ENCODE measurements at regions of chr5 and their contacts with region 1.

Region 1: DNA sequence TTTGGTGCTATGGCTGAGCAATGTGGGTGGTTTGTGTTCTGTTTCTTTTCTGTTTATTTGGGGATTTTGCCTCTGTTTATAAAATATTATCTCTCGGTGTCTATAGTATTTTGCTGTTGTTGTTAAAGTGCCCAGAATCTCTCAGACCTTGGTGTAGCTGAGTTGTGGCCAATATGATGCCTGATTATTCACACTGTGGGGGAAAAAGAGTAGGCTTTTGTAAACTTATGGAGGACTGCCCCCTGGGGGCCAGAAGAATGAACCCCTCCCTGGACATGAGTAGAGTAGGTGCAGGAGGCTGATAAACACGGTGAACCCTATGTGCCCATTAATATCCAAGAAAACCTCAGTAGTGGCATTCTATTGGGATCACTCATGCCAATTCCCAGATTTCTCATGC is 49.0 kb upstream of the DPYSL3 start:
- DNase-seq: peak; percentile 22 to 31
- H3K4me3 ChIP-seq: no peak overlapping the region
- H3K27ac ChIP-seq: no peak overlapping the region
- H3K4me1 ChIP-seq: peaks cover 8 to 10% of the 10 kb centered on the region in 2 donors
- H3K27me3 ChIP-seq: no peaks in the 10 kb centered on the region
- CTCF ChIP-seq: peak in 4 of 6 experiments; percentile 32 to 43 (median 38)
- POLR2A ChIP-seq: no peak

Region 2: DNA sequence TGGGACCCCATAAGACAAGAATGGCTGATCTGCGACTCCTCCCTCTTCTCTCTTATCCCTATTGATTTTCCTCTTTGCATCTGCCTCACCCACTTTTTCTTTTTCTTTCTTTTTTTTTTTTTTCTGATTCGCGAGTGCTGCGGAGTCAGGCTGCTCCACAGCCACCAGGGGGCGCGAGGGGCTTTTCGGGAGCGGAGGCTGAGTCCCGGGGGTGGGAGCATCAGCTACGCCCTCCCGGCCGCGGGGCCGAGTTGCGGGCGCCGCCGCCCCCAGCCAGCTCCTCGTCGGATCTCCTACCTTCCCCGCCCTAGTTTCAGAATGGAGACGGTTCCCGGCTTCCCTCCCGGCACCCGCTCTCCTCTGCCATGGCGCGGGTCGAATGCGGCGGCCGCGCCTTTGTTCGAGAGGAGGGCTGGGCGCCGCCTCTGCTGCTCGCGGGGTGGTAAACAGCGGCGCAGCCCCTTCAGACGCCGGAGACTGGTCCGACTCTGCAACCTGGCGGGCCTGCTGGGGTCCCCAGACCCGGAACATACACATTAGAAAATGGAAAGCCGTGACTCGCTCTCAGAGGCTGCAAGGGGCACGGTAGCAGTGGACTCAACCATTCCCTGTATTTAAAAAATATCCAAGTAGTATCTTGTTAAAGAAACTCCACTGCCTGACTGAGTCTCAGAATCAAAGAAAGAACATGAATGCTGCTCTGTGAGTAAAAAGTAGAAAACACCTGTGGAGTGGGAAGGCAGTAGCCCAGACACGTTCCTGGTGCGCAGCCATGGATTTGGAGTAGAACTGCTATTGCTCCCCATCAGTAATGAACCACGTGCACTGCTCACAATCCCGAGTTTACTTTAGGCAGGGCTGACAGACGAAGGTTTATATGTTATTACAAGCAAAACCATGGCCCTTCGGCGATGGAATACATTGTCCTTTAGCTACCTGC is 104.7 kb before region 1 on chr5:
- intact Hi-C with region 1: loop called (anchors 5 kb)
- DNase-seq: peak; percentile 81 to 88
- H3K4me3 ChIP-seq: peak overlapping the region in 2 of 3 donors; percentile 23 to 56
- H3K27ac ChIP-seq: peak overlapping the region; percentile 15 to 81 (median 62)
- H3K4me1 ChIP-seq: peaks cover 2 to 13% of the 10 kb centered on the region in 2 donors
- H3K27me3 ChIP-seq: no peaks in the 10 kb centered on the region
- CTCF ChIP-seq: peak; percentile 65 to 95 (median 84)
- POLR2A ChIP-seq: no peak

Region 3: GRCh38 chr5:147464211-147464610 is 94.6 kb before region 1 on chr5:
- intact Hi-C with region 1: loop called (anchors 5 kb)
- DNase-seq: peak; percentile 17 to 28
- H3K4me3 ChIP-seq: no peak overlapping the region
- H3K27ac ChIP-seq: no peak overlapping the region
- H3K4me1 ChIP-seq: no peaks in the 10 kb centered on the region
- H3K27me3 ChIP-seq: no peaks in the 10 kb centered on the region
- CTCF ChIP-seq: peak in 4 of 6 experiments; percentile 33 to 57 (median 50)
- POLR2A ChIP-seq: no peak

Region 4: DNA sequence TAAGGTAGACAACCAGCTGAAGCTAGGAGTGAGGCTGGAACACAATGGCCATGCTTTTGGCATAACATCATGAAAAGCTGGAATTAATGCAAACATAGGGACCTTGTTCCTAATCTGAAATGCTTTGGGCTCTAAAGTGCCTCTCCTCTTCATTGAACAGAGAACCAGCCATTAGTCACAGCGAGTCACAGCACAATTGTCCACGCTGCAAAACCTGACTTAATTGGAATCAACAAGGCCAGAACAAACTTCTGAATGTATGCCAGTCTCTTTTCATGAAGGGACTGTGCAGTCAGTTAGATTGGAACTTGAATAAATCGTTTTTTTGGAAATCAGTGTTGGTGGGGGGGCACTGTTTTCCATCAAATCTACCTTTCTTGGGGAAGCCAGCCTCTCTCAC is 127.2 kb after region 1 on chr5:
- intact Hi-C with region 1: no loop called
- DNase-seq: no peak
- H3K4me3 ChIP-seq: no peak overlapping the region
- H3K27ac ChIP-seq: no peak overlapping the region
- H3K4me1 ChIP-seq: no peaks in the 10 kb centered on the region
- H3K27me3 ChIP-seq: no peaks in the 10 kb centered on the region
- CTCF ChIP-seq: no peak
- POLR2A ChIP-seq: no peak